HepG2 (cell line): ENCODE measurements at regions of chr12 and their contacts with region 1.

Region 1: DNA sequence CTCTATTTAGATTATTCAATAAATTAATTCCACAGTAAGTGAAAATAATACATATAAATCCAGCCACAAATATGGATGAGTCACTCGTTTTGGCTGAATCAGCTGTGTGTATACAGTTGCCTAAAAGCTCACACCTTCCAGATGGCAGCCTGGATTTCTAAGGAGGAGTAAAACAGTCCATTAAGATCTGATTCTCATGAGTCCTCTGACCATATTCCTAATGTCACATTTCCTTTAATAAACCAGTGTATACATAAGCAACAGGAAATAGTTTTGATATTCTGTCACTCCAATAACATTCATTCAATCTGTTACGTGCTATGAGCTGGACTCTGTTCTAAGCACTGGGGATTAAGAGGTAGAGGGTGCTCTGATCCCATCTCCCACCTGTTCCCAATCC is 21.8 kb downstream of the MDM1 start:
- DNase-seq: no peak
- ATAC-seq: no peak
- H3K4me3 ChIP-seq: no peak overlapping the region
- H3K27ac ChIP-seq: no peak overlapping the region
- H3K4me1 ChIP-seq: no peaks in the 10 kb centered on the region
- H3K27me3 ChIP-seq: no peaks in the 10 kb centered on the region
- CTCF ChIP-seq: no peak
- EP300 ChIP-seq: no peak
- POLR2A ChIP-seq: no peak
- RAD21 ChIP-seq: no peak

Region 2: DNA sequence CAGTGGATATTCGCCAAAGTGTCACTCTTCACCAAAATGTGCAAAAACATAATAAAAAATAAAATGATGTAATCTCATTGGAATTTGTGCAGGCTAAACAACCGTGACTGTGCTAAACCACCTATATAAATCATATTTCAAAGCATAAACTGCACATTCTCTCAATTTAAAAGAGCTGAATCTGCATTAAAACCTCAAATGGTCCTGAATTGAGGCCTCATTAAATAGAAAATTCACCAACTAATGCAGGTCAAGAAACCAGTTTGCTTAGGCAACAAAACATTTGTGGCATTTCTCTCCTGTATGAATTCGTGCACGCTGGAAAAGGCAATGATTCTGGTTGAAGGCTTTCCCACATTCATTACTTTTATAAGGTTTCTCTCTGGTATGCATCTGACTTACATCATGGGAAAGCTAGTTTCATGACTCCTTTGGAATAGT is 401.3 kb before region 1 on chr12:
- CTCF ChIA-PET with region 1: no interaction called
- POLR2A ChIA-PET with region 1: no interaction called
- in situ Hi-C with region 1: no loop called
- intact Hi-C with region 1: no loop called
- DNase-seq: no peak
- ATAC-seq: no peak
- H3K4me3 ChIP-seq: no peak overlapping the region
- H3K27ac ChIP-seq: no peak overlapping the region
- H3K4me1 ChIP-seq: no peaks in the 10 kb centered on the region
- H3K27me3 ChIP-seq: no peaks in the 10 kb centered on the region
- CTCF ChIP-seq: no peak
- EP300 ChIP-seq: no peak
- POLR2A ChIP-seq: no peak
- RAD21 ChIP-seq: no peak

Region 3: GRCh38 chr12:68223083-68223747 is 87.2 kb before region 1 on chr12:
- CTCF ChIA-PET with region 1: no interaction called
- POLR2A ChIA-PET with region 1: no interaction called
- in situ Hi-C with region 1: loop called (anchors 5 kb)
- intact Hi-C with region 1: no loop called
- DNase-seq: peak; percentile 71
- ATAC-seq: peak; percentile 100
- H3K4me3 ChIP-seq: no peak overlapping the region
- H3K27ac ChIP-seq: no peak overlapping the region
- H3K4me1 ChIP-seq: no peaks in the 10 kb centered on the region
- H3K27me3 ChIP-seq: peaks cover 0 to 6% of the 10 kb centered on the region in 2 experiments; a peak in 1 of 5 replicates
- CTCF ChIP-seq: peak; percentile 94
- EP300 ChIP-seq: no peak
- POLR2A ChIP-seq: no peak
- RAD21 ChIP-seq: peak; percentile 82

Region 4: GRCh38 chr12:68334132-68334531 is 23.8 kb after region 1 on chr12:
- CTCF ChIA-PET with region 1: no interaction called
- POLR2A ChIA-PET with region 1: no interaction called
- in situ Hi-C with region 1: no loop called
- intact Hi-C with region 1: no loop called
- DNase-seq: no peak
- ATAC-seq: no peak
- H3K4me3 ChIP-seq: no peak overlapping the region
- H3K27ac ChIP-seq: no peak overlapping the region
- H3K4me1 ChIP-seq: peaks cover 46% of the 10 kb centered on the region
- H3K27me3 ChIP-seq: no peaks in the 10 kb centered on the region; a peak in 1 of 5 replicates
- CTCF ChIP-seq: peak; percentile 61
- EP300 ChIP-seq: no peak
- POLR2A ChIP-seq: no peak
- RAD21 ChIP-seq: no peak